CD8-positive, alpha-beta T cell (primary cell): ENCODE measurements at regions of chr3 and their contacts with region 1.

Region 1: GRCh38 chr3:102229062-102229655 is 205.7 kb upstream of the ZPLD1 start:
- DNase-seq: peak; percentile 55 to 83 (median 75)
- ATAC-seq: peak; percentile 91
- H3K4me3 ChIP-seq: no peak overlapping the region
- H3K4me3 Mint-ChIP-seq: no peak overlapping the region
- H3K27ac ChIP-seq: no peak overlapping the region
- H3K27ac Mint-ChIP-seq: no peak overlapping the region
- H3K4me1 ChIP-seq: peaks cover 5% of the 10 kb centered on the region
- H3K4me1 Mint-ChIP-seq: peaks cover 12% of the 10 kb centered on the region
- H3K27me3 ChIP-seq: no peaks in the 10 kb centered on the region
- H3K27me3 Mint-ChIP-seq: peaks cover 7% of the 10 kb centered on the region
- CTCF ChIP-seq: peak; percentile 91

Region 2: DNA sequence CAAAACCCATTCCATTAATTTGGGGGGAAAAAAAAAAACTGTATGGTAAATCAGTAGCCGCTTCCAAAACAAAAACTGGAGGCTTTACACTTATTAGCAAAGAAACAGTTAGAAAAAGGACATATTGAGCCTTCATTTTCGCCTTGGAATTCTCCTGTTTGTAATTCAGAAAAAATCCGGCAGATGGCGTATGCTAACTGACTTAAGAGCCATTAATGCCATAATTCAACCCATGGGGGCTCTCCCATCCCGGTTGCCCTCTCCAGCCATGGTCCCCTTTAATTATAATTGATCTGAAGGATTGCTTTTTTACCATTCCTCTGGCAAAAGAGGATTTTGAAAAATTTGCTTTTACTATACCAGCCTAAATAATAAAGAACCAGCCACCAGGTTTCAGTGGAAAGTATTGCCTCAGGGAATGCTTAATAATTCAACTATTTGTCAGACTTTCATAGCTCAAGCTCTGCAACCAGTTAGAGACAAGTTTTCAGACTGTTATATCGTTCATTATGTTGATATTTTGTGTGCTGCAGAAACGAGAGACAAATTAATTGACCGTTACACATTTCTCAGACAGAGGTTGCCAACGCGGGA is 533.3 kb before region 1 on chr3:
- CTCF ChIA-PET with region 1: interaction called, 5 read pairs
- POLR2A ChIA-PET with region 1: no interaction called
- intact Hi-C with region 1: loop called (anchors 1 to 5 kb)
- DNase-seq: peak in 6 of 9 experiments; percentile 14 to 79 (median 52)
- ATAC-seq: peak; percentile 37
- H3K4me3 ChIP-seq: no peak overlapping the region
- H3K4me3 Mint-ChIP-seq: no peak overlapping the region
- H3K27ac ChIP-seq: no peak overlapping the region
- H3K27ac Mint-ChIP-seq: no peak overlapping the region
- H3K4me1 ChIP-seq: no peaks in the 10 kb centered on the region
- H3K4me1 Mint-ChIP-seq: peaks cover 2% of the 10 kb centered on the region
- H3K27me3 ChIP-seq: no peaks in the 10 kb centered on the region
- H3K27me3 Mint-ChIP-seq: no peaks in the 10 kb centered on the region
- CTCF ChIP-seq: peak; percentile 81

Region 3: DNA sequence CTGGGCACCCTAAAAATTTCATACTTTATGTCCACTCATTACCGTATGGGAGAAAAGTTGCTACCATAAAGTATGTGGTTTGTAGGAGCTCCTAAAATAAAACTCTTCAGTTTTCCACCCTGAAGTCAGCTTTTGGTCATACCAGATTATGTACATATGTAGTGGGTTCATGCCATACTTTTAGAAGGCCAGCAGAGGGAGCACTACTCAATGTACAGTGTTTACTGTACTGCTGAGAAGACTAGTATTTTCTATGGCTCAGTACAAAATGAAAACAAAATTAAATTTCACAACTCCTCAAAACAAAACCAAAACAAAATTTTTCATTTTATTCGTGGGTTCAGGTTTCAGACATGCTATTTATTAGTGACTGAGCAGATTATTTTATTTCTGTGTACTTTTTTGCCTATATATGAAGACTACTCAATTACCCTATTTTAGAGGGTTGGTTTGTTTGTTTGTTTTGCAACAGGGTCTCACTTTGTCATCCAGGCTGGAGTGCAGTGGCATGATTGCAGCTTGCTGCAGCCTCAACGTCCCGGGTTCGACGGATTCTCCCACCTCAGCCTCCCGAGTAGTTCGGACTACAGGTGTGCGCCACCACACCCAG is 425.9 kb before region 1 on chr3:
- CTCF ChIA-PET with region 1: interaction called, 400 read pairs
- POLR2A ChIA-PET with region 1: interaction called, 5 read pairs
- intact Hi-C with region 1: no loop called
- DNase-seq: peak in 7 of 9 experiments; percentile 30 to 87 (median 61)
- ATAC-seq: peak; percentile 100
- H3K4me3 ChIP-seq: no peak overlapping the region
- H3K4me3 Mint-ChIP-seq: peak overlapping the region; percentile 32
- H3K27ac ChIP-seq: no peak overlapping the region
- H3K27ac Mint-ChIP-seq: peak overlapping the region; percentile 75
- H3K4me1 ChIP-seq: no peaks in the 10 kb centered on the region
- H3K4me1 Mint-ChIP-seq: peaks cover 36% of the 10 kb centered on the region
- H3K27me3 ChIP-seq: no peaks in the 10 kb centered on the region
- H3K27me3 Mint-ChIP-seq: no peaks in the 10 kb centered on the region
- CTCF ChIP-seq: peak; percentile 97

Region 4: DNA sequence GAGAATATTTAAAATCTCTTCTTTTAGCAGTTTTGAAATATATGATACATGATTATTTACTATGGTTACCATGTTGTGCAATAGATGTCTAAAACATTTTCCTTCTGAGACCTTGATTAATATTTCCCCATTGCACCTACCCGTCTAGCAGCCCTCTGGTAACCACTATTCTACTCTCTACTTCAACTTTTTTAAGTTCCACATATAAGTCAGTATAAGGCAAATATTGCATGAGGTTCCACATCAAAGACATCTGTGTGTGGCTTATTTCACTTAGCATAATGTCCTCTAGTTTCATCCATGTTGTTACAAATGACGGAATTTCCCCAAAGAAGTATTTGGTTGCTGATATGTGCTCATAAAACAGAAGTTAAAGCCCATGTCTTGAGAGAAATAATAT is 409.4 kb before region 1 on chr3:
- CTCF ChIA-PET with region 1: interaction called, 400 read pairs
- POLR2A ChIA-PET with region 1: interaction called, 4 read pairs
- intact Hi-C with region 1: no loop called
- DNase-seq: peak in 1 of 9 experiments; percentile 19
- ATAC-seq: no peak
- H3K4me3 ChIP-seq: no peak overlapping the region
- H3K4me3 Mint-ChIP-seq: no peak overlapping the region
- H3K27ac ChIP-seq: no peak overlapping the region
- H3K27ac Mint-ChIP-seq: no peak overlapping the region
- H3K4me1 ChIP-seq: no peaks in the 10 kb centered on the region
- H3K4me1 Mint-ChIP-seq: peaks cover 25% of the 10 kb centered on the region
- H3K27me3 ChIP-seq: no peaks in the 10 kb centered on the region
- H3K27me3 Mint-ChIP-seq: no peaks in the 10 kb centered on the region
- CTCF ChIP-seq: no peak

Region 5: GRCh38 chr3:101849051-101849720 is 380.0 kb before region 1 on chr3 and contains the start of gene NFKBIZ:
- CTCF ChIA-PET with region 1: interaction called, 13 read pairs
- POLR2A ChIA-PET with region 1: interaction called, 4 read pairs
- intact Hi-C with region 1: loop called in 1 of 2 experiments (anchors 1 kb)
- DNase-seq: peak; percentile 85 to 96 (median 91)
- ATAC-seq: peak; percentile 73
- H3K4me3 ChIP-seq: peak within 1 kb of the TSS; percentile 75 to 92
- H3K4me3 Mint-ChIP-seq: peak within 1 kb of the TSS; percentile 96
- H3K27ac ChIP-seq: peak within 1 kb of the TSS; percentile 94 to 96
- H3K27ac Mint-ChIP-seq: peak within 1 kb of the TSS; percentile 97
- H3K4me1 ChIP-seq: peaks cover 30% of the 10 kb centered on the region
- H3K4me1 Mint-ChIP-seq: peaks cover 39% of the 10 kb centered on the region
- H3K27me3 ChIP-seq: no peaks in the 10 kb centered on the region
- H3K27me3 Mint-ChIP-seq: no peaks in the 10 kb centered on the region
- CTCF ChIP-seq: no peak
- total RNA-seq, gene NFKBIZ: 460 to 477 TPM

Region 6: DNA sequence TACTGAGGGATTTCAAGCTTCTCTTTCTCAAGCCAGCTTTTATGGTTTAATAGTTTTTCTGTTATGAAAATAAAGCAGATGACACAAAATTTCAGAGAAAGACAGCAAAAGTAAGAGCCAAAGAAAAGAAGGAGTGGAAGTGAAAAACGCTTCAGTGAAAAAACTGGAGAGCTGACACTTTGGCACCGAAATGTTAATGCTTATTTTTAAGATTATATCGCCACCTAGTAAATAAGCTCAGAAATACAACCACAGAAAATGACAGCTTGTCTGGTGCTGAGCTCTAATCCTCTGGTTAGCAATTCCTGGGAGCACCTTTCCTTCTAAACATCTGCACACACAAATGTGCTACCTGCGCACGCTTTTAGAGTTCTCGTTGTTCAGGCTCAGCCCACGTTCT is 307.3 kb after region 1 on chr3:
- CTCF ChIA-PET with region 1: interaction called, 40 read pairs
- POLR2A ChIA-PET with region 1: no interaction called
- intact Hi-C with region 1: loop called (anchors 1 to 2 kb)
- DNase-seq: peak in 2 of 9 experiments; percentile 24 to 43
- ATAC-seq: no peak
- H3K4me3 ChIP-seq: no peak overlapping the region
- H3K4me3 Mint-ChIP-seq: no peak overlapping the region
- H3K27ac ChIP-seq: no peak overlapping the region
- H3K27ac Mint-ChIP-seq: no peak overlapping the region
- H3K4me1 ChIP-seq: no peaks in the 10 kb centered on the region
- H3K4me1 Mint-ChIP-seq: peaks cover 5% of the 10 kb centered on the region
- H3K27me3 ChIP-seq: no peaks in the 10 kb centered on the region
- H3K27me3 Mint-ChIP-seq: peaks cover 9% of the 10 kb centered on the region
- CTCF ChIP-seq: peak; percentile 9